Breast epithelium (tissue), 4 donors: ENCODE measurements at regions of chr1 and their contacts with region 1.

Region 1: DNA sequence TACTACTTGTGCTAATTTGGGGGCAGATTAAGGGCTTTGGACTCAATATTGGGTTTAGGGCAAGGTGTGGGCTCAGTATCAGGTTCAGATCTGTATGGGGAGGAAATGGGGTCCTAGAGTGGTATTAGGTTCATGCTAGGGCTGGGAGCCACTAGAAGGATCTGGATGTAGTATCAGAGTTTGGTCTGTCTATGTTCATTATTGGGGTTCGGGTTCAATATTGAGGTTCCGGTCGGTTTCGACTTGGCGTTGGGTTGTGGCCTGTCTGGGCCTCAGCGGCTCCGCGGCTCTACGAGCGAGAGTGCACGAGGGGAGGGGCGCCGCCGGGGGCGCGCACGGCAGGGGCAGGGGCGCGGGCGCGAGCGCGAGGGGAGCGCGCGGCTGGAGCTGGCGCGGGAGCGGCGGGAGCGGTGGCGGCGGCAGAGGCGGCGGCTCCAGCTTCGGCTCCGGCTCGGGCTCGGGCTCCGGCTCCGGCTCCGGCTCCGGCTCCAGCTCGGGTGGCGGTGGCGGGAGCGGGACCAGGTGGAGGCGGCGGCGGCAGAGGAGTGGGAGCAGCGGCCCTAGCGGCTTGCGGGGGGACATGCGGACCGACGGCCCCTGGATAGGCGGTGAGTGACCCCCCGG is at the start of gene PTPRF:
- DNase-seq: peak in 1 of 2 donors; percentile 73
- H3K4me3 ChIP-seq: peak within 1 kb of the TSS; percentile 59 to 97 (median 88)
- H3K27ac ChIP-seq: peak within 1 kb of the TSS; percentile 85 to 98
- H3K4me1 ChIP-seq: peaks cover 0 to 13% of the 10 kb centered on the region in 2 donors
- H3K27me3 ChIP-seq: no peaks in the 10 kb centered on the region
- CTCF ChIP-seq: no peak
- POLR2A ChIP-seq: no peak
- total RNA-seq, gene PTPRF: 109 to 149 (median 116) TPM

Region 2: GRCh38 chr1:43577655-43578421 is 47.2 kb after region 1 on chr1:
- intact Hi-C with region 1: loop called (anchors 1 kb)
- DNase-seq: peak in 1 of 2 donors; percentile 46
- H3K4me3 ChIP-seq: no peak overlapping the region
- H3K27ac ChIP-seq: peak overlapping the region; percentile 54 to 72
- H3K4me1 ChIP-seq: peaks cover 0 to 7% of the 10 kb centered on the region in 2 donors
- H3K27me3 ChIP-seq: no peaks in the 10 kb centered on the region
- CTCF ChIP-seq: no peak
- POLR2A ChIP-seq: no peak

Region 3: DNA sequence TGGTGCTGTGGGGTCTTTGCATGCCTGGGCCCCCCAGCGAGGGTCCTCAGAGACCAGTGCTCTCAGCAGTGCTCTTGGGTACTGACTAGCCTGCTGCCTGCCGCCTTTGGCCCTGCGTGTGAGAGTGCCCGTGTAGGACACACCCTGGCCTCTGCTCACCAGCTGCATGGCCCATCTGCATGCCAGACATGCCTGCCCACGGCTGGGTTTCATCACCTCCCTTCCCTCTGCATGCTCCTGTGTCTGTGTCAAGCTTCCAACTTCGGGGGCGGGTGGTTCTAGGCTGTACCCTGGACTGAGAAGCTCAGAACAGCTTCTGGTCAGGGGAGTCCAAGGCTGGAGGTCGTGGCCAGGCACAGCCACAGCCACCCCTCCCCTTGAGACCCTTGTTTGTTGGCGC is 57.0 kb after region 1 on chr1:
- intact Hi-C with region 1: loop called (anchors 1 kb)
- DNase-seq: peak in 1 of 2 donors; percentile 56
- H3K4me3 ChIP-seq: no peak overlapping the region
- H3K27ac ChIP-seq: peak overlapping the region; percentile 48 to 66
- H3K4me1 ChIP-seq: no peaks in the 10 kb centered on the region
- H3K27me3 ChIP-seq: no peaks in the 10 kb centered on the region
- CTCF ChIP-seq: no peak
- POLR2A ChIP-seq: no peak

Region 4: GRCh38 chr1:44616991-44617702 is 1086.6 kb after region 1 on chr1:
- intact Hi-C with region 1: no loop called
- DNase-seq: no peak
- H3K4me3 ChIP-seq: peak overlapping the region; percentile 36 to 63 (median 47)
- H3K27ac ChIP-seq: no peak overlapping the region
- H3K4me1 ChIP-seq: peaks cover 0 to 6% of the 10 kb centered on the region in 2 donors
- H3K27me3 ChIP-seq: peaks cover 0 to 12% of the 10 kb centered on the region in 2 donors
- CTCF ChIP-seq: no peak
- POLR2A ChIP-seq: no peak